ENCODE measurements at regions of chr15 and their contacts with region 1.

Region 1: DNA sequence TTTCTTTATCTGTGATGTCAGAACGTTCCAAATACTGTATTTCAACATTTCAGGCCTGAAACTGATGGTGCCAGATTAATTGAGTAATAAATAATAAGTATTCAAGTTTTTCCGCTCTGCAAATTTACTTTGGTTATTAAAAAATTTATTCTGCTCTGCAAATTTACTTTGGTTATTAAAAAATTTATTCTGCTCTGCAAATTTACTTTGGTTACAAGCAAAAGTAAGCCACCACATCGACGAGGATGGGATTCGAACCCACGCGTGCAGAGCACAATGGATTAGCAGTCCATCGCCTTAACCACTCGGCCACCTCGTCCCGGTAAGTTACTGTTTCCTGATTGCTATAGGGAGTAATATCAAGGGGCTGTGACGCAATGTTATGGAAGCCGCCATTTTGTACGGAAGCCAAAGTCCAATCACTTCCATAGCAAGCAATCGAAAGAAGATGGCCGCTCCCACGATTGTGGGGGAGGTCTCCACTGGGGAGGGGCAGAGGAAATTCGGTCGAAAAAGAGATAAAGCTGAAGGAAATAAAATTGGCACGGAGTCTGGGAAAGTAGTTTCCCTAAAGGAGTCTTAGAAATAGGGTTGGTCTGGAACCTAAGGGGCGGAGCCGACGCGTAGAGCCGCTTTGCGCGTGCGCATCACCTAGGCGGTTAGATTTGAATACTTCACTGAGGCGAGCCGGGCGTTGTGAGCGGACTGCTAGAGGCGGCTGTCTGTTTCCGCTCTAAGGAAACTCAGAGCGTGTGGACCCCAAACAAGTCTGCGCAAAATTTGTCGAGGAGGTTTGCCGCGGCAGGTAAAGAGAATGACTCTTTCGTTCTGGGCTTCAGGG is at the start of gene KNL1:
- H3K4me3 Mint-ChIP-seq: peak within 1 kb of the TSS; percentile 92
- H3K27ac Mint-ChIP-seq: peak within 1 kb of the TSS; percentile 100
- H3K4me1 Mint-ChIP-seq: peaks cover 17% of the 10 kb centered on the region
- H3K27me3 Mint-ChIP-seq: peaks cover 7% of the 10 kb centered on the region

Region 2: GRCh38 chr15:40694688-40695468 is 101.1 kb after region 1 on chr15 and contains the start of gene RAD51:
- intact Hi-C with region 1: loop called (anchors 2 kb)
- H3K4me3 Mint-ChIP-seq: peak within 1 kb of the TSS; percentile 98
- H3K27ac Mint-ChIP-seq: peak within 1 kb of the TSS; percentile 89
- H3K4me1 Mint-ChIP-seq: peaks cover 25% of the 10 kb centered on the region
- H3K27me3 Mint-ChIP-seq: no peaks in the 10 kb centered on the region

Measured in dendritic cell treated with granulocyte-macrophage colony-stimulating factor and Interleukin-4, amounts not matched to agents 40 ng/mL and 50 ng/mL, for 4 days (primary cell).